Aorta (tissue), 5 donors: ENCODE measurements at regions of chrX and their contacts with region 1.

Region 1: DNA sequence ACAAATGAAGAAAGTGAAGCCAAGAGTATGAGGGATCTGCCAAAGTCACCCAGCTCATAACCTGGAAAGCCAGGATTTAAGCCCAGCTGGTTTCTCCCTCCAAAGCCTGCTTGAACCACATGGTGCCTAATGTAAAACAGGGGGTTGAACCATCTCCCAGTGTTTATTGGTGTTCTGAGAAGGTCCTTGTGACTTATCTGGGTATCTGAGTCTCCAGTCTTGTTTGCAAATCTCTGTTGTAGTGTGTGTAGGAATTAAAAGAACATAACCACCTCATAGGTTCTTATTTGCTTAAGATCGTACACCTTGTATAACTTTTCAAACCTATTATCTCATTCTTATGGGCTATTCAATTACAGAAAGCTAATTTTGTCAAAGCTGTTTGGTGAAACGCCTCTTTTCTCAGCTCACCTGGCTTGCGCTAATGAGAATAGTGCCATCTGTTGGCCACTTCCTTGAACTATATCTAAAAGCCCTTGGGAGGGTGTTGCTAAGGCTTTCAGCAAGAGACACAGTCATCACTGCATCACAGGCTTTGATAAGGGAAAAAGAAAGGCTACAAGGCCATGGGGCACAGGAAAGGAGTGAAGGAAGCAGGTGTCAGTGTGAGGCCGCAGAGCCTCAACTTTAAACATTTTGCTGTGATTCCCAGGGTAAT is 34.0 kb downstream of the ETDB start:
- DNase-seq: no peak
- ATAC-seq: peak; percentile 71
- H3K4me3 ChIP-seq: no peak overlapping the region
- H3K27ac ChIP-seq: no peak overlapping the region
- H3K4me1 ChIP-seq: no peaks in the 10 kb centered on the region
- H3K27me3 ChIP-seq: no peaks in the 10 kb centered on the region

Region 2: GRCh38 chrX:134688839-134689238 is 397.5 kb before region 1 on chrX:
- intact Hi-C with region 1: no loop called
- DNase-seq: no peak
- ATAC-seq: no peak
- H3K4me3 ChIP-seq: no peak overlapping the region
- H3K27ac ChIP-seq: no peak overlapping the region
- H3K4me1 ChIP-seq: no peaks in the 10 kb centered on the region
- H3K27me3 ChIP-seq: no peaks in the 10 kb centered on the region

Region 3: DNA sequence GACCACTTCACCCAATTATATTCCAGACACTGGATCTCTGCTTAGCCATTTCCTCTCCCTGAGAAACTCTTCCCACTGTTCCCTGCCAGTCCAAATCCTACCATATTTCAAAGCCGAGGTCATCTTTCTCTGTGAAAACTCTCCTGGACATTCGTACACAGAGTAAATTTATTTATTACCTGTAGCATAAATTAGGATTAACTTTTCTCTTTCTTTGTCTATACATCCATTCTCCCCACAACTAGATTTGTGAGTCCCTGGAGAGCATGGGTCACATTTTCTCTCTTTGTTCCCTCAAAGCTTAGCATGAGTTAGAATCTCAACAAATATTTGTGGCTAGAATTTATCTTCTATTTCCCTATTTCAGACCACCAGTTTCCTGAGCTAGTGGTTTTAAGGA is 123.3 kb before region 1 on chrX:
- intact Hi-C with region 1: loop called (anchors 2 to 5 kb)
- DNase-seq: no peak
- ATAC-seq: no peak
- H3K4me3 ChIP-seq: no peak overlapping the region
- H3K27ac ChIP-seq: no peak overlapping the region
- H3K4me1 ChIP-seq: peaks cover 0 to 2% of the 10 kb centered on the region in 2 donors
- H3K27me3 ChIP-seq: no peaks in the 10 kb centered on the region

Region 4: DNA sequence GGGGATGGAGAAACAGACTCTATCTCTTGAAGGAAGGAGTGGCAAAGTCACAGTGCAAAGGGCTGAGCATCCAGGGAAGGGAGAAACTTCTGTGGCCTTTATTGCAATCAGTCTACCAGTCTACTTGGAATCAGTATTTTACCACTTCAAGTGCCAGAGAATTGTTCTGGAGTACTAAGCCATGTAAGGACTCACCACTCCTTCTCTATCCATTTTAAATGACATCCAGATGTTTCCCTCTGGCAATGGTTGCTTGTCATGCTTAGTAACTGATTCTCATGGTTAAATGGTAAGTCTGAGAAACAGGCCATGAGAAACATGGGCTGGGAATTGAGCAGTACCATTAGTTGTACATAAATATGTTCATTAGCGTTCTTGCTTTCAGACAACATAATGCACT is 116.6 kb before region 1 on chrX:
- intact Hi-C with region 1: loop called (anchors 2 to 5 kb)
- DNase-seq: no peak
- ATAC-seq: no peak
- H3K4me3 ChIP-seq: no peak overlapping the region
- H3K27ac ChIP-seq: no peak overlapping the region
- H3K4me1 ChIP-seq: peaks cover 0 to 2% of the 10 kb centered on the region in 2 donors
- H3K27me3 ChIP-seq: no peaks in the 10 kb centered on the region

Region 5: DNA sequence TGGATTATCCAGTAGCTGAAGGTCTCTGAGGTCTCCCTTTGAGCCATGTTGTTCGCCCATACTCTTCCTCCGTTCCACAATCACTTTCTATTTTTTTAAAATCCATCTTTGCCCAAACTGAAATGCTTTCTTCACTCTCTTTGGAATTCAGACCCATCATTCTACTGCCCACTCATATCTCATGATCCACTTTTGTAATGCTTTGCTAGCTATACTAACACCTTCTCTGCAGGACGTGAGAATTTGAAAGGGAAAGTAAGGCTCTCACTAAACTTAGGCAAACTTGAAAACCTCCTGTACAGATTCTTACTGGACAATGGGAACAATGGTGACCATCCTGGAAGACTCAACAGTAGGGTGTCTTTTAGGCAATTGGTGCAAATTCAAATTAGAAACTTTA is 25.6 kb before region 1 on chrX:
- intact Hi-C with region 1: no loop called
- DNase-seq: no peak
- ATAC-seq: no peak
- H3K4me3 ChIP-seq: no peak overlapping the region
- H3K27ac ChIP-seq: no peak overlapping the region
- H3K4me1 ChIP-seq: no peaks in the 10 kb centered on the region
- H3K27me3 ChIP-seq: no peaks in the 10 kb centered on the region